ENCODE measurements at regions of chr6 and their contacts with region 1.

Region 1: GRCh38 chr6:124551711-124552233 is 410.5 kb upstream of the RNF217 start:
- DNase-seq: no peak
- H3K4me3 ChIP-seq: no peak overlapping the region
- CTCF ChIP-seq: no peak
- POLR2A ChIP-seq: no peak

Region 2: GRCh38 chr6:123733180-123733956 is 818.4 kb before region 1 on chr6:
- intact Hi-C with region 1: loop called (anchors 5 kb)
- DNase-seq: no peak
- H3K4me3 ChIP-seq: no peak overlapping the region
- CTCF ChIP-seq: no peak
- POLR2A ChIP-seq: no peak

Measured in lower leg skin (tissue), 4 donors.